ENCODE measurements at regions of chr1 and their contacts with region 1.

Region 1: GRCh38 chr1:47918257-47918867 is 78.8 kb downstream of the TRABD2B start:
- DNase-seq: peak in 1 of 5 donors; percentile 42
- ATAC-seq: peak in 2 of 4 donors; percentile 20 to 57
- H3K4me3 ChIP-seq: no peak overlapping the region
- H3K27ac ChIP-seq: no peak overlapping the region
- H3K4me1 ChIP-seq: peaks cover 0 to 17% (median 0%) of the 10 kb centered on the region in 12 donors
- H3K27me3 ChIP-seq: no peaks in the 10 kb centered on the region
- CTCF ChIP-seq: no peak
- POLR2A ChIP-seq: no peak

Region 2: GRCh38 chr1:46372425-46372824 is 1545.9 kb before region 1 on chr1:
- intact Hi-C with region 1: no loop called
- DNase-seq: no peak
- ATAC-seq: no peak
- H3K4me3 ChIP-seq: no peak overlapping the region
- H3K27ac ChIP-seq: no peak overlapping the region
- H3K4me1 ChIP-seq: peaks cover 0 to 24% (median 0%) of the 10 kb centered on the region in 12 donors
- H3K27me3 ChIP-seq: no peaks in the 10 kb centered on the region
- CTCF ChIP-seq: no peak
- POLR2A ChIP-seq: no peak

Region 3: GRCh38 chr1:47859092-47859743 is 59.1 kb before region 1 on chr1:
- intact Hi-C with region 1: loop called in 1 of 10 experiments (anchors 10 kb)
- DNase-seq: no peak
- ATAC-seq: no peak
- H3K4me3 ChIP-seq: no peak overlapping the region
- H3K27ac ChIP-seq: no peak overlapping the region
- H3K4me1 ChIP-seq: no peaks in the 10 kb centered on the region
- H3K27me3 ChIP-seq: no peaks in the 10 kb centered on the region
- CTCF ChIP-seq: no peak
- POLR2A ChIP-seq: no peak

Measured in heart left ventricle (tissue), 16 donors.